OCI-LY7 (cell line): ENCODE measurements at regions of chr1 and their contacts with region 1.

Region 1: DNA sequence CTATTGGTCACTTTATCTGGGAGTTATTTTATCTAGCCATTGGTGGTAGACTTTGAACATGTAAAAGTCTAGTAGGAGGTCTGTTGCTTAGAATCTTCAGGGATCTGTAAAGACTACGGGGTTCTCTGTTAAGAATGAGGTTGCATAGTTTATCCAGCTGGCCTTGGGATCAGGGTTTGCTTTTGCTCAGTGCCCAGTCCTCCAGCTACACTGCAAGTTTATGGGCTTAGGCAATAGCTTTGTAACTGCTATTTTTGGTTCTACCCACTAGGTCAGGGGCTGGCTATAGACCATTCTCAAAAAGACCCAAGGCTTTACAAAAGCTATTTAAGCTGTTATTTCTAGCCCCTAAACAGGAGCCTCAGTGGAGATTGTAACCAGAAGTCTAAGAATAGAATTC is 9.8 kb downstream of the SH3GLB1 start:
- DNase-seq: no peak
- H3K4me3 ChIP-seq: no peak overlapping the region
- H3K27ac ChIP-seq: no peak overlapping the region
- H3K4me1 ChIP-seq: no peaks in the 10 kb centered on the region
- CTCF ChIP-seq: no peak

Region 2: GRCh38 chr1:86696522-86696921 is 17.6 kb before region 1 on chr1:
- CTCF ChIA-PET with region 1: no interaction called
- POLR2A ChIA-PET with region 1: no interaction called
- intact Hi-C with region 1: no loop called
- DNase-seq: no peak
- H3K4me3 ChIP-seq: no peak overlapping the region
- H3K27ac ChIP-seq: no peak overlapping the region
- H3K4me1 ChIP-seq: no peaks in the 10 kb centered on the region
- CTCF ChIP-seq: no peak

Region 3: GRCh38 chr1:86733340-86733739 is 19.2 kb after region 1 on chr1:
- CTCF ChIA-PET with region 1: interaction called, 3 read pairs
- POLR2A ChIA-PET with region 1: interaction called, 12 read pairs
- intact Hi-C with region 1: no loop called
- DNase-seq: no peak
- H3K4me3 ChIP-seq: no peak overlapping the region
- H3K27ac ChIP-seq: no peak overlapping the region
- H3K4me1 ChIP-seq: no peaks in the 10 kb centered on the region
- CTCF ChIP-seq: no peak